ENCODE measurements at regions of chr10 and their contacts with region 1.

Region 1: DNA sequence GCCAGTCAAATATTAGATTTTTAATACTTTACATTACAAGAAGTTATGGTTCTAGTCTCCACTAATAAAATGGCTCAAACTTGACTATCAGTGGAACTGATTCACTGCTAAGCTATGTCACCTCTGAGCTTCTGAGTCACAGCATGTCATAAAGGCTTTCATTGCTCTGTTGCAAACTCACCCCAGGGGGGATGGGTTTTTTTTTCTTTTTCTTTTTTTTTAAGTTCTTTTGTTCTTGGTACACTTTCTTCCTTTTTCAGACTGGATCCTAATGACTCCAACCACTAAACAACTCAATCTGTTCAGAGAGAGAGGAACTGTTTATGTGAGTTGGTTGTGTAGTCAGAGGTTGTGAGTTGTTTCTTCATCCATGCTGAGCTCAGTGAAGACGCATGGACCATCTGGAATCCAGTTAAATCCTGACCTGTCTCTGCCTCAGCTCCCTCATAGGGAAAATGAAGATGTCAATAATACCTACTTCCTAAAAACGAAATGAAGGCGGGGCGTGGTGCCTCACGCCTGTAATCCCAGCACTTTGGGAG is 11.0 kb downstream of the MYOF start:
- DNase-seq: peak; percentile 90
- H3K4me3 ChIP-seq: no peak overlapping the region
- H3K27ac ChIP-seq: peak overlapping the region; percentile 94
- H3K4me1 ChIP-seq: peaks cover 91% of the 10 kb centered on the region
- H3K27me3 ChIP-seq: no peaks in the 10 kb centered on the region
- CTCF ChIP-seq: no peak

Region 2: DNA sequence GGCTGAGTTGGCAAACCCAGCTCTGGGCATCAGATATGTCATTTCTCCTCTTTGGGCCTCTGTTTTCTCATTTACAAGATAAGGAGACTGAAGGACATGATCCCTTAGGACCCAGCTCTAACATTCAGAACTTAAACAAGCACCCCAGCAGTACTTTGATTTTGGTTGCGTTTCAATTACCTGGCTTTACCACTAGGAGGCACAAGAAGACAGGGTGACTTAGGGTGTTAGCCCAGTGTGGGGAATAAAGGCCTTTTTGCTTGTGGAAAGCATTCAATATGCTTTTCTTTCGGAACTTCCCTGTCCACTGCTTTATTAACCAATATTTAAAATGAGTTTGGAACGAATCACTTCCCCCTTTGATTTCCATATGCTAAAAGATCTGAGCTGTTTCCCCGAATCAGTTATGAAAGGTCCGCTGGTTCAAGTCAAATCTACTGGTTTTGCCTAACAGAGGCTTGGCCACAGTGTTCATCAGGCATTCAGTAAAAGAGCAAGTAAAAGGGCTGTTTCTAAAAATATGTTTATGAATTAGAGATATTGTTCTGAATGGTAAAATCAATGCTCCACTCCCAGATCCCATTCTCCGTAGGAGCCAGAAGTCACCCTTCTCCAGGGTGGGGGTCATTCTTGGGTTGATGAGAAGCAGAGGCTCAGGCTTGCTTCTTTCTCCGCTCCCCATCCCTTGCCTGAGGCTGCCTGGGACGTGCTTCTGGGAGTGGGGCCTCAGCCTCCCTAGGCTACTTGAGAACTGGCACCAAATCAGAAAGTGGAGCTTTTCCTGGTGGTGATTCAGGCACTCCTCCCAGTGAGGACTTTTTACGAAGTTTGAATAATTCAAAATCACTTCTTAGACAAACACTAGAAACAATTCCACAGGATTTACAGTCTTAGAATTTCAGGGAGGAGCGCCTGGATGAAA is 94.5 kb before region 1 on chr10:
- CTCF ChIA-PET with region 1: no interaction called
- dilution Hi-C with region 1: loop called (anchors 5 kb)
- in situ Hi-C with region 1: no loop called
- intact Hi-C with region 1: loop called (anchors 1 kb)
- DNase-seq: peak; percentile 81
- H3K4me3 ChIP-seq: no peak overlapping the region
- H3K27ac ChIP-seq: peak overlapping the region; percentile 95
- H3K4me1 ChIP-seq: peaks cover 46% of the 10 kb centered on the region
- H3K27me3 ChIP-seq: no peaks in the 10 kb centered on the region
- CTCF ChIP-seq: peak; percentile 93 to 95

Region 3: GRCh38 chr10:93445097-93445960 is 25.9 kb before region 1 on chr10:
- CTCF ChIA-PET with region 1: interaction called, 13 read pairs
- dilution Hi-C with region 1: no loop called
- in situ Hi-C with region 1: no loop called
- intact Hi-C with region 1: loop called (anchors 1 kb)
- DNase-seq: peak; percentile 99
- H3K4me3 ChIP-seq: no peak overlapping the region
- H3K27ac ChIP-seq: peak overlapping the region; percentile 97
- H3K4me1 ChIP-seq: peaks cover 51% of the 10 kb centered on the region
- H3K27me3 ChIP-seq: no peaks in the 10 kb centered on the region
- CTCF ChIP-seq: no peak

Region 4: GRCh38 chr10:93458821-93459257 is 12.3 kb before region 1 on chr10:
- CTCF ChIA-PET with region 1: interaction called, 4 read pairs
- dilution Hi-C with region 1: no loop called
- in situ Hi-C with region 1: no loop called
- intact Hi-C with region 1: loop called (anchors 1 kb)
- DNase-seq: peak; percentile 97
- H3K4me3 ChIP-seq: peak overlapping the region in 1 of 3 experiments; percentile 21
- H3K27ac ChIP-seq: peak overlapping the region; percentile 93
- H3K4me1 ChIP-seq: peaks cover 49% of the 10 kb centered on the region
- H3K27me3 ChIP-seq: no peaks in the 10 kb centered on the region
- CTCF ChIP-seq: no peak